ENCODE measurements at regions of chr1 and their contacts with region 1.

Region 1: DNA sequence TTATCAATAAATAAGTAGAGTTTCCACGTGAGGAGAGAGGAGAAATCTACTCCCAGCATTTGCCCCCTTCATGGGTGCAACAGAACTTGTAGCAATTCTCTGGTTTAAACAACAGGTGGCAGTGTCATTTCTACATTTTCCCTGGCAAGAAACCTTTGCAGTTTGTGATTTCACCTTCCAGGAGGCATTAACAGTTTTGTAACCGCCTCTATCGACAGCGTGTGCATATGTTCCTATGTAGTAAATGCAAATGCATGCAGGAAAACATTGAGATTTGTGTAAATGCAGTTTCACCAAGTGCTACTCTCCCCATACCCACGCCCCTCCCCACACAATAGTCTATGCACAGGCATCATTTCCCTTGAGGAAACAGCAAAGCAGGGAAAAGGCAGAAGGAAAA is 494.7 kb downstream of the SMYD3 start:
- DNase-seq: peak; percentile 53 to 72 (median 58)
- ATAC-seq: peak; percentile 89
- H3K4me3 ChIP-seq: no peak overlapping the region
- H3K27ac ChIP-seq: no peak overlapping the region
- H3K4me1 ChIP-seq: no peaks in the 10 kb centered on the region; a peak in 2 of 5 replicates
- H3K27me3 ChIP-seq: no peaks in the 10 kb centered on the region
- CTCF ChIP-seq: peak; percentile 75 to 92 (median 83)
- EP300 ChIP-seq: no peak
- POLR2A ChIP-seq: no peak
- RAD21 ChIP-seq: peak; percentile 94 to 97

Region 2: DNA sequence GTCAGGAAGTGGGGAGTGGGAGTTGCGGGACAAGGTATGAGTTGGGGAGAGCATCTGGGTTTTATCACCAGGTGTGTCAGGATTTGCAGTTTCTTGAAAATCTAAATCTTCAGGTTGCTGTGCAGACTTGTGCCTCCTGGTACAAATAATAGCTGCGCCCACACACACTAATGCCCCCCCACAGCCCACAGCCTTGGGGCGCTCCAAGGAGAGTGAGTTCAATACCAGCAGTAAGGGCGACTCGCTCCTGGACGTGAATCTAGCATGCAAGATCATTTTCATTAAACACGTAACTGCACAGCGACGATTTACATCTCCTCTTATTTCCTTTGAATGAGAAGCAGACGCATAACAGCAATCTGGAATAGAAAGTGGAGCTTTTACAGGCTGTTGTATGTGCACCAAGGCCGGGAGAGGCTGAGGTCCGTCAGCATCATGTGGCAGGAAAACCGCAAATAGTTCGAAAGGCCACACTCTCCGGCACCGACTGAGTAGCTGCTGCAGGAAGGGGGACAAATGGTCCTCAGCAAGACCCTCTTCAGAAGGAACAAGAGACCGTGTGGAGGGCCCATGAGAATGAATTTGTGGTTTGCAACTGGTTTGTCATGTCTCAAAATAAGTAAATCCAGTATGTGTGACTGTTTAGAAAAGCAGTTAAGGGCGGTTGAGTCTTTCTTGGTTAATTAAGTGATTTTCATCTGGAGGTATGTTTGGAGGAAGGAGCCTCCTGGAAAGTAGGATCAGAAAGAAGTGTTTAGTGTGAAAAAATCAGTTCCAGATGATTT is 55.3 kb after region 1 on chr1:
- CTCF ChIA-PET with region 1: no interaction called
- POLR2A ChIA-PET with region 1: no interaction called
- in situ Hi-C with region 1: no loop called
- intact Hi-C with region 1: no loop called
- DNase-seq: no peak
- ATAC-seq: no peak
- H3K4me3 ChIP-seq: no peak overlapping the region
- H3K27ac ChIP-seq: no peak overlapping the region
- H3K4me1 ChIP-seq: peaks cover 4 to 34% of the 10 kb centered on the region in 2 experiments; a peak in 4 of 5 replicates
- H3K27me3 ChIP-seq: no peaks in the 10 kb centered on the region
- CTCF ChIP-seq: no peak
- EP300 ChIP-seq: no peak
- POLR2A ChIP-seq: no peak
- RAD21 ChIP-seq: no peak

Region 3: DNA sequence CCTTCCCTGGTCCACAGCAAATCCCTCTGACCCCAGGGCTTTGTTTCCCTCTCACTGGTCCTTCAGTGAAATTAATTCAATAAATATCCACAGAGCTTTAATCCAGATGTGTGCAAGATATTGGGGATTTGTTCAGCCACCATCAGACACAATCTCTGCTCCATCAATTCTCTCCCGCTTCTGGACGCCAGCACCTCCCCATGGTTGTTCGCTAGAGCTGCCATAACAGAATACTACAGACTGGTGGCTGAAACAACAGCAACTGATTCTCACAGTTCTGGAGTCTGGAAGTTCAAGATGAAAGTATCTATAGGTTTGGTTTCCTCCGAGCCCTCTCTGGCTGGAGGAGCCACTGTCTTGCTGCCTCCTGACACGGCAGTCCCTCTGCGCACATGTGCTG is 190.8 kb after region 1 on chr1:
- CTCF ChIA-PET with region 1: interaction called, 3 read pairs
- POLR2A ChIA-PET with region 1: no interaction called
- in situ Hi-C with region 1: no loop called
- intact Hi-C with region 1: loop called (anchors 1 kb)
- DNase-seq: no peak
- ATAC-seq: peak; percentile 89
- H3K4me3 ChIP-seq: no peak overlapping the region
- H3K27ac ChIP-seq: no peak overlapping the region
- H3K4me1 ChIP-seq: peaks cover 0 to 15% of the 10 kb centered on the region in 2 experiments; a peak in 2 of 5 replicates
- H3K27me3 ChIP-seq: no peaks in the 10 kb centered on the region
- CTCF ChIP-seq: peak; percentile 45 to 69 (median 55); a peak in 5 of 6 replicates
- EP300 ChIP-seq: no peak
- POLR2A ChIP-seq: no peak
- RAD21 ChIP-seq: peak; percentile 13 to 74; a peak in 2 of 4 replicates

Region 4: DNA sequence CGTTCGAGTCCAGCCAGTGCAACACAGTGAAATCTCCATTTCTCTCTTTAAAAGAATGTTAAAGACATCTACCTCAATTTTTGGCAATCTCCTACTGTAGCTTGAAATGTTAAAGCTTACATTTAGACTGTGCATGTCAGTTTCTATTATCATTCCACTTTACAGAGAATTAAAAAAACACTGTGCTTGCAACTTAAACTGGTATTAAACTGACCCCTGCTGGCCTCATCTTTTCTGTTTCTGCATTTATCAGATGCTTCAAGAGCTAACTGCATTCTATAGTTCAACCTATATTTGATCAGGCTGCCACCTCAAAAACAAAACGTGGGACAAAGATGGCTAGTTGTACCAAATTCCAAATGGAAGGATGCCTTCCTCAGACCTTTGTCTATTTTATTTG is 268.2 kb after region 1 on chr1:
- CTCF ChIA-PET with region 1: interaction called, 33 read pairs
- POLR2A ChIA-PET with region 1: no interaction called
- in situ Hi-C with region 1: loop called (anchors 25 kb)
- intact Hi-C with region 1: loop called (anchors 1 kb)
- DNase-seq: peak in 1 of 4 experiments; percentile 58
- ATAC-seq: peak; percentile 86
- H3K4me3 ChIP-seq: no peak overlapping the region
- H3K27ac ChIP-seq: no peak overlapping the region
- H3K4me1 ChIP-seq: no peaks in the 10 kb centered on the region; a peak in 3 of 5 replicates
- H3K27me3 ChIP-seq: no peaks in the 10 kb centered on the region
- CTCF ChIP-seq: peak; percentile 36 to 75 (median 59); a peak in 5 of 6 replicates
- EP300 ChIP-seq: no peak
- POLR2A ChIP-seq: no peak
- RAD21 ChIP-seq: peak; percentile 93 to 96

Region 5: GRCh38 chr1:246497331-246497915 is 485.1 kb after region 1 on chr1:
- CTCF ChIA-PET with region 1: interaction called, 8 read pairs
- POLR2A ChIA-PET with region 1: no interaction called
- in situ Hi-C with region 1: no loop called
- intact Hi-C with region 1: loop called (anchors 2 kb)
- DNase-seq: peak; percentile 62 to 84 (median 67)
- ATAC-seq: peak; percentile 45
- H3K4me3 ChIP-seq: no peak overlapping the region
- H3K27ac ChIP-seq: no peak overlapping the region
- H3K4me1 ChIP-seq: peaks cover 0 to 2% of the 10 kb centered on the region in 2 experiments; a peak in 2 of 5 replicates
- H3K27me3 ChIP-seq: no peaks in the 10 kb centered on the region
- CTCF ChIP-seq: peak; percentile 70 to 91 (median 71); a peak in 5 of 6 replicates
- EP300 ChIP-seq: no peak; the same call in 1 of the 2 replicates
- POLR2A ChIP-seq: no peak
- RAD21 ChIP-seq: peak; percentile 84 to 92

Measured in K562 (cell line).